Colonic mucosa (tissue), 4 donors: ENCODE measurements at regions of chr2 and their contacts with region 1.

Region 1: DNA sequence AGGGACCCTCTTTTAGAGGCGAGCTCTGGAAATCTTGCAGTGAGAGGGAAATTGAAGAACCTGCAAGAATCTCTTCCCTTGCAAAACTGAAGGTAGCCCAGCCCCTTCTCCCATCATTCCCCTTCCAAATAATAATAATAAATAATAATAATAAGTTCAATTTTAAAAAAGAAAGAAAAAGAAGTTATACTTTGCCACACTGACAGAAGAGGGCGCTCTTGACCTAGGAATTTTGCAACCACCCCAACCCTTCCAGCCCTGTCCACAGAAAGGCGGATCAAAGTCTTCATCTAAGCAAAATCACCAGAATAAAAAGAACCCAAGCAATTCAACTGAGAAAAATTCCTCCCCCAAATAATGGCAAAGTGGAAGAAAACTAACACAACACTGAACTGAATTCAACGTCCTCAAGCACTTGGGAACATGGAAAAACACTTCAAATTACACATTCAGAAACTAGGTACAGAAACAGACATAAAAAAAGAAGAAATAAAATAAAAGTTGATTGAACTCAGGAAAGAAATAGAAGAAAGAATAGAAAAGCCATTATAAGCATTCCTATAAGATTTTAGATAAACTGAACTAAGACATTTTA is 98.9 kb upstream of the GLS start:
- DNase-seq: peak; percentile 65
- H3K4me3 ChIP-seq: no peak overlapping the region
- H3K27ac ChIP-seq: no peak overlapping the region
- H3K4me1 ChIP-seq: no peaks in the 10 kb centered on the region
- H3K27me3 ChIP-seq: no peaks in the 10 kb centered on the region
- CTCF ChIP-seq: peak; percentile 69

Region 2: GRCh38 chr2:190698895-190699294 is 82.8 kb before region 1 on chr2:
- intact Hi-C with region 1: no loop called
- DNase-seq: no peak
- H3K4me3 ChIP-seq: no peak overlapping the region
- H3K27ac ChIP-seq: no peak overlapping the region
- H3K4me1 ChIP-seq: no peaks in the 10 kb centered on the region
- H3K27me3 ChIP-seq: no peaks in the 10 kb centered on the region
- CTCF ChIP-seq: no peak

Region 3: DNA sequence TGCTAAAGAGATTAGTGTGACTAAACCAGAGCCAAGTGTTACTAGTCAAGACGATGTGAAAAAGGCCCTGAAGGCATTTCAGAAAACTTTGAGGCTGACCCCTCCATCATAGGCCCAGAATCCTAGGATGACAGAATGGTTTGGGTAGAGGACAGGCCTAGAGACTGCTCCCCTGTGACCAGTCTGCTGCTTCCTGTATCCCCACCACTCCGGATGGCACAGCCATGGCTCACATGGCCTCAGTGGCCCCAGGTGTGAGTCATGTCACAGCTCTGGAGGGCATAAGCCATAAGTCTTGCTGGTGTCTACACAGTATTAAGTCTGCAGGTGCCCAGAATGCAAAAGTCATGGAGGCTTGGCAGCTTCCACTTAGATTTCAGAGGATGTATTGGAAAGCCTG is 244.7 kb after region 1 on chr2:
- intact Hi-C with region 1: loop called (anchors 2 kb)
- DNase-seq: no peak
- H3K4me3 ChIP-seq: no peak overlapping the region
- H3K27ac ChIP-seq: no peak overlapping the region
- H3K4me1 ChIP-seq: no peaks in the 10 kb centered on the region
- H3K27me3 ChIP-seq: no peaks in the 10 kb centered on the region
- CTCF ChIP-seq: no peak

Region 4: GRCh38 chr2:191038241-191038725 is 256.6 kb after region 1 on chr2:
- intact Hi-C with region 1: no loop called
- DNase-seq: no peak
- H3K4me3 ChIP-seq: no peak overlapping the region
- H3K27ac ChIP-seq: no peak overlapping the region
- H3K4me1 ChIP-seq: no peaks in the 10 kb centered on the region
- H3K27me3 ChIP-seq: no peaks in the 10 kb centered on the region
- CTCF ChIP-seq: no peak